ENCODE measurements at regions of chr6 and their contacts with region 1.

Region 1: GRCh38 chr6:3977875-3978711 is 100.8 kb downstream of the FAM217A start:
- DNase-seq: peak; percentile 93
- H3K4me3 ChIP-seq: no peak overlapping the region
- H3K27ac ChIP-seq: no peak overlapping the region
- H3K4me1 ChIP-seq: no peaks in the 10 kb centered on the region
- H3K27me3 ChIP-seq: no peaks in the 10 kb centered on the region
- CTCF ChIP-seq: peak; percentile 87

Region 2: DNA sequence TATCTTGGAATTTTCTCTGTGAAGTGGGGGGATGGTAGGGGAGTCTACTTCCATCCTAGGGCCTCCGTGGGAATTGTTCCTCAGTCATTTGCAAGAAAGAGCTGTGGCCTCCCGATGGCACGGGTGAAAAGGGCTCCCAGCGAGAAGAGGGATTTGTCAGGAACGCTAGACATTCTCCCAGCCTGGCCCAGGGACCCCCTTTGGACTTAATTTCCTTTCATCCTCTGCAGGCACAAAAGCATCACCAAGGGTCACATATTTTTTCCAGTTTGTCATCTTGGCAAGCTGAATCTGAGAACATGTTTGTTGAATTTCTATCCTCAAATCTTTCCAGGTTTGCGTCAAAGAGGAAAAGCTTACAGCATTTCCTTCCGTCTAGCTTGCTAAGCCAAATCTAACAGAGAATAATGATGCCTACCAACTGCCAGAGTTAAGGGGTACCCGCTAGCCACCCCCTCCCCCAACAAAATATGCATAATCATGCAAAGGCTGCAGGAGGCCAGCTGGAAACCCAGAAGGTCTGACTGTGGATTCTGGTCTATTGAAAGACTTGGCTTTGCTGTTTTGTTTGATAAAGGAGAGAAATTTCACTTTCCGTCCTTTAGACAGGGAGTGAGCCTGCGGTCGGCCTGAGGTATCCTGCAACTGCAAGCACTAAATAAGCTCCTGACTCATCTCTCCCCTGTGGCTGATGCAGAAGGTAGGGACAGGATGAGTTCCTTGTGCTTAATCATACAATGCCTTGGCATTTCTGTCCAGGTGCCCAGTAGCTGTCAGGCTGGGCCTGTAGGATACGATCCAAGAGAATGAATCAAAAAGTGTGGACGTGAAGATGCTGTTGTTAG is 696.2 kb before region 1 on chr6:
- CTCF ChIA-PET with region 1: no interaction called
- POLR2A ChIA-PET with region 1: no interaction called
- intact Hi-C with region 1: loop called (anchors 5 kb)
- DNase-seq: peak; percentile 19
- H3K4me3 ChIP-seq: no peak overlapping the region
- H3K27ac ChIP-seq: peak overlapping the region; percentile 3
- H3K4me1 ChIP-seq: peaks cover 18% of the 10 kb centered on the region
- H3K27me3 ChIP-seq: no peaks in the 10 kb centered on the region
- CTCF ChIP-seq: no peak

Region 3: DNA sequence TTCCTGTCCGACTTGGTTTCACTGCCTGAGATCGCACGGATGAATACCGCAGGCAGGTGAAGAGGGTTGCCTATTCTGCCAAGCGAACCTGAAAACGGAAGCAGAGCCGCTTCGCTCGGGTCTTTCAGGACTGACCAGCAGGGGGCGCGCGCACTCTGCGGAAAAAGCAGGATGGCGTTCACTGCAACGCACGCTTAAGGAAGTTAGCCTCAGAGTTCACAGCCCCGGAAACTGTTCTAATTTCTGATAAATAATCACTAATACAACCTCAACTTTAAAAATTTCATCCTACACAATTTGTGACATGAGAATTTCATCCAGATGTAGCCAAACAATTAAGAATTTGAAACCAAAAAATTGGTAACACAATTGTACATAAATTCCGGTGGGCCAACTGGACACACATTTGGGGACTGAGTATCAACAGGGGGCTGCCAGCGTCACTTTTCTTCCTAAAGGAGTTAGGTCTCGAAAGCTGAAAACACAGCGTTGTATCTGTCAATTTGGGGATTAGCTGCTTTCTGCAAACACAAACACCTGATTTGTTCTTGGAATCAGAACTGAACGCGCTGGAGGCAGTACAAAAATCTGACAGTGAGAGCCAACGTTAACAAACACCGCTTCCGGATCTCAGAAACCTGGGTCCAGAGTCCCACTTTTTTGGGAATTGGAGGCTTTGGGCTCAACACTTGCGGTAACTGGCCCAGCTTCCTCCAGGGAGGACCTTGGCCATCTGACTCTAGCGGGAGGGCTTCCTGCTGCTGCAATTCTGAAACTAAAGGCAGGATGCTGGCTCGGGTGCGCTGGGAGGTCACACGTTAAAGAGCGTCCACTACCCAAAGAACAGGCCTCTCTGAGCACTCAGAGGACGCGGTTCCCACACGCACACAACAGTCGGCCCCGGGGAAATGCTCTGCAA is 235.4 kb before region 1 on chr6:
- CTCF ChIA-PET with region 1: interaction called, 11 read pairs
- POLR2A ChIA-PET with region 1: no interaction called
- intact Hi-C with region 1: loop called (anchors 1 kb)
- DNase-seq: peak; percentile 74
- H3K4me3 ChIP-seq: no peak overlapping the region
- H3K27ac ChIP-seq: peak overlapping the region; percentile 25
- H3K4me1 ChIP-seq: peaks cover 20% of the 10 kb centered on the region
- H3K27me3 ChIP-seq: no peaks in the 10 kb centered on the region
- CTCF ChIP-seq: peak; percentile 95

Region 4: DNA sequence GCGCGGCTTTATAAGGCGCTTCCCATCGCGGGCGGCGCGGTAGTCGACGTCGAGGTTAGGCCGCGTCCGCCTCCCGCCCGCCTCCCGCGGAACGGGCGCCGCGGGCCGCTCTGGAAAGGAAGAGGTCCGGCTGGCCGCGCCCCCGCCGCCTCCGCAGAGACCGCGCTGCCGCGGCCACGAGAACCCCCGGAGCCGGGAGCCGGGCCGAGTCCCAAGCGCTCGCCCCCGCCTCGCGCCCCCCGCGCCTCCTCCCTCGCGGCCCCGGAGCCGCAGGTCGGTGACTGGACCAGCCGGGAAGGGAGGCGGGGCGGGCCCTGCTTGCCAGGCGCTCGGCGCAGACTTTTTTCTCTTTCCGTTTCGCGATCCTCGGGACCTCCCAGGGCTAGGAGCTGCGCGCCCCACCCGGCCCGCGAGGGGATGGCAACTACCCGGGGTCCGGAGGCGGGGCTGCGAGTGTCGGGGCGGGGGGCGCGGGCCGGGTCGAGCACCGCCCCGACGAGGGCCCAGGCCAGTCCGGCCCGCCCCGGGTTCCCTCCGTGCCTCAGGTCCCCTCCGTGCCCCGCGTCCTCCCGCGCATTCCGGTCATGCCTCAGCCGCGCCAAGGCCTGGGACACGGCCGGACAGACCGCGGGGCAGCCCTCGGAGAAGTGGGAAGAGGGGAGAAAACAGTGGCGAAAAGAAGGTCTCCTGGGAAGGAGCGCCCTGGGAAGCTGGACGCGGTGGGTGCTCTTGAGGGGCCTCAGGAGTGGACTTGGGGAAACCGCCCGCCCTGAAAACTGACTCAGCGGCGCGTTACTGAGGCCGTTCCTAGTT is 226.2 kb before region 1 on chr6:
- CTCF ChIA-PET with region 1: interaction called, 20 read pairs
- POLR2A ChIA-PET with region 1: no interaction called
- intact Hi-C with region 1: no loop called
- DNase-seq: peak; percentile 88
- H3K4me3 ChIP-seq: peak overlapping the region; percentile 58
- H3K27ac ChIP-seq: peak overlapping the region; percentile 71
- H3K4me1 ChIP-seq: peaks cover 30% of the 10 kb centered on the region
- H3K27me3 ChIP-seq: no peaks in the 10 kb centered on the region
- CTCF ChIP-seq: peak; percentile 40

Region 5: GRCh38 chr6:3848925-3849605 is 129.0 kb before region 1 on chr6 and contains the start of gene FAM50B:
- CTCF ChIA-PET with region 1: interaction called, 20 read pairs
- POLR2A ChIA-PET with region 1: interaction called, 3 read pairs
- intact Hi-C with region 1: loop called (anchors 1 kb)
- DNase-seq: peak; percentile 91
- H3K4me3 ChIP-seq: peak within 1 kb of the TSS; percentile 68
- H3K27ac ChIP-seq: peak within 1 kb of the TSS; percentile 75
- H3K4me1 ChIP-seq: no peaks in the 10 kb centered on the region
- H3K27me3 ChIP-seq: no peaks in the 10 kb centered on the region
- CTCF ChIP-seq: peak; percentile 92
- total RNA-seq, gene FAM50B: 10.1 and 13.0 TPM in 2 replicates

Region 6: DNA sequence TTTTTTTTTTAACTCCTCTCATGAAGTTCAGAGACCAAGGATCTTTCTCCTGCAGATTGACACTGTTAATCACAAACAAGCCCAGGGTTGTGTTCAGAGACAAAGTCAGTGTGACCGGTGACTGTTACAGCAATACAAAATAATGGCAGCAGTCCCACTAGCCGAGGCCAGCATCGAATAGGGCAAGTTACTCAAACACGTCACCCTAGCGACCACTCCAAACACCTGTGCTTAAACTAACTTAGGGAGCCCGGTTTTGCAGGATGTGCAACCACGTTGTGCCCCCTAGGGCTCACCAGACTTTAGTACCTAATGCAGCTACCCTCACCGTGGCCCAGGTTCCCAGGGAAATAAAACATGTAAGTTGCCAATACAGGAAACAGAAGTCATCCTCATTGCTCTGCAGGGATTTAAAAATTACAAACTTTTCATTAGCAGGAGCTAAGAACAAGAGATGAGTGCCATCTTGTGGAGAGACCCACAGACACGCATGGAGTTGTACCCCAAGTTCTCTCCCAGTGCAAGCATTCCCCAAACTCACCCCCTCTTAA is 90.9 kb before region 1 on chr6:
- CTCF ChIA-PET with region 1: interaction called, 3 read pairs
- POLR2A ChIA-PET with region 1: no interaction called
- intact Hi-C with region 1: loop called (anchors 5 kb)
- DNase-seq: peak; percentile 23
- H3K4me3 ChIP-seq: no peak overlapping the region
- H3K27ac ChIP-seq: no peak overlapping the region
- H3K4me1 ChIP-seq: peaks cover 11% of the 10 kb centered on the region
- H3K27me3 ChIP-seq: no peaks in the 10 kb centered on the region
- CTCF ChIP-seq: peak; percentile 55

Region 7: GRCh38 chr6:3990692-3991501 is 12.8 kb after region 1 on chr6:
- CTCF ChIA-PET with region 1: interaction called, 13 read pairs
- POLR2A ChIA-PET with region 1: no interaction called
- intact Hi-C with region 1: no loop called
- DNase-seq: peak; percentile 94
- H3K4me3 ChIP-seq: no peak overlapping the region
- H3K27ac ChIP-seq: peak overlapping the region; percentile 59
- H3K4me1 ChIP-seq: peaks cover 3% of the 10 kb centered on the region
- H3K27me3 ChIP-seq: no peaks in the 10 kb centered on the region
- CTCF ChIP-seq: peak; percentile 95

Measured in A673 (cell line).